Testis (tissue), 5 donors: ENCODE measurements at regions of chr2 and their contacts with region 1.

Region 1: DNA sequence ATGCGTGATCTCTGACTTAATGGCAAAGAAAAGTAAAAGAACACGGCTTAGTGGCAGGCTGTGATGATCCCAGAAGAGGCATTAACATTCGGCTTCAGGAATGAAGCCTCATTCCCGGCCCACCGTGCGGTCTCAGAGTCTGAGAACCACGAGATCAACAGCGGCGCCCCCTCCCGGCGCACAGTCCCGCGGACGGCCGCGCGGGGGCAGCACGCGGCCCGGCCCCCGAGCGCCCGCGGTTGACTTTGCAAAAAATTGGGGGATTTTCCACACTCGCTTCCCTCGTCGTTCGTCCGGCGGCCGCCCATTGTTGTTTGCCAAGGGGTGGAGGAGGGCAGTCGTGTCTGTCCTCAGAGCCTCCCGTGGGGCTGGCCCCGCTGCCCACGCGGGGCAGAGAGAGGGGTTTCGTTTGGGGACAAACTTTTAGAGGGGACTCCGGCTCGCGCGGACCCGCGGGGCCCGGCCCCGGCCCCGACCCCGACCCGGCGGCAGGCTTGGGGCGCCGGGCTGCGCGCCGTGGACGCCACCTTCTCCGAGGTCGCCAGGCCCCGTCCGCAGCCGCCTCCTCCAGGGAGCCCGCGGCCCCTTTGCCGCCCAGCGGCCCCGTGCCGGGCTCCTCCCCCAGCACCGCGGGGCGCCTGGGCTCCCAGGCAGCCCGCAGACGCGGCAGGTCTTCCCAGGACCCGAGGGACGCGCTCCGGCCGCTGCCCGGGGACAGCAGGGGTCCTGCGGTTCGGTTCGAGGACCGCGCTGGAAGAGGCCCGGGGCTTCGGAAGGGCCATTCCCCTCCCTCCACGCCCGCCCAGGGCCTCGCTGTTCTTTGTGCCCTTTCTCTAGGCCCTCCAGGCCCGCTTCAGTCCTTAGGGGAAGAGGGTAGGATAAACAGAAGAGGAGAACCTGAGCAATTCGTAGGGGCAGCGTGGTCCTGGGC is 3.4 kb upstream of the HS6ST1 start:
- DNase-seq: peak; percentile 92
- H3K4me3 ChIP-seq: peak overlapping the region; percentile 55 to 66
- H3K27ac ChIP-seq: peak overlapping the region; percentile 77 to 90
- H3K4me1 ChIP-seq: peaks cover 23% of the 10 kb centered on the region
- H3K27me3 ChIP-seq: no peaks in the 10 kb centered on the region
- CTCF ChIP-seq: peak; percentile 88 to 98 (median 94)
- POLR2A ChIP-seq: no peak

Region 2: DNA sequence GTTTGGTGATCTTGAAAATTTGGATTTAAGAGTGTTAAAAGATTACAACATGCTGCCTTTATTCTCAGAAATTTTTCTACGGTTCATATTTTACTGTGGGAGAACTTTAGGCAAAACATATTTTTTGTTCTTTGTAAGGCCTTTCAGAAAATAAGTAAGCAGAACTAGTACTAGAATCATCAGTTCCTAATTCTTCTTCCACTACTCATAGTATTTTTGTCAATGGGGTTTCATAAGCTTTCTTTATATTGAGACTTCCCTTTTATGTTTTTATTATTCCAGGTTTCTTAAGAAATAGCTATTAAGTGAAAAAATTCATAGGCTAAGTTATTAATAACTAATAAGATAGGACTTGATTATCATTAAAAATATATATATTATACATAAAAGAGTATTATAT is 218.6 kb before region 1 on chr2:
- intact Hi-C with region 1: no loop called
- DNase-seq: no peak
- H3K4me3 ChIP-seq: no peak overlapping the region
- H3K27ac ChIP-seq: no peak overlapping the region
- H3K4me1 ChIP-seq: no peaks in the 10 kb centered on the region
- H3K27me3 ChIP-seq: no peaks in the 10 kb centered on the region
- CTCF ChIP-seq: no peak
- POLR2A ChIP-seq: no peak

Region 3: DNA sequence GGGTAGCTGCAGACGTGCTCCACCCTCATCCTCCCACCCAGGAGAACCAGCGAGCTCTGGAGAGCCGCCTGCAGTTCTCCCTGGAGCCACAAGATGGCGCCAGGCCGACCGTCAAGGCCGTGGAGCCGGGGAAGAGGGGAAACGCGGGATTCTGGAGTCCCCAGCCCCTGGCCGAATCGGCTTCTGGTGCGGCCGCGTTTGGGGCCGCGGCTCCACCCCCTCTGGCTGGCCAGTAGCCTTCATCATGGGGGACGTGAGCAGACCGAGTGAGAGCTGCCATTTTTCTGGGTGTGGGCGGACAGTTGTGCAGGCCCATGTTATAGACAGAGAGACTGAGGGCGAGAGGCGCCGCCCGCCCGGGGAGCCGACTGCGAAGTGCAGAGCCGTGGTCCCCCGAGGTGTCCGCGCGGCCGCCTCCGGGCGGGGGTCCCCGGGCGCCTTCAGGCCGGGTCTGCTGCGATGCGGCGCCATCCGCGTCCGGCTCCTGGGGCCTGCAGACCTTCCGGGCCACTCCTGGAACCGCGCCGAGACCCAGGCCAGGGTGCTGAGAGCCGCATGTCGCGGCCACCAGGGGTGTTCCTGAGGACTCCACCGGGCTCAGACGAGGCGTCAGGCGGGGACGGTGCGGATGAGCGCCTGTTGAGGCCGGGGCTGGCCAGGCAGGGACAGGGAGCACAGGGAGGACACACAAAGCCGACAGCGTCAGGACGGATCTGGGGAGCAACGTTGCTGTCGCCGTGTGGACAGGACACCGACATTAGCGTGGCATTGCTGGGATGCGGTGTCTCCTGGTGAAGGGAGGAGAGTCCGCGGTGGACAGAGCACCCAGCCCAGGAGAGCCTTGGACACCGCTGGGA is 414.9 kb after region 1 on chr2:
- intact Hi-C with region 1: loop called (anchors 10 kb)
- DNase-seq: peak; percentile 90
- H3K4me3 ChIP-seq: peak overlapping the region; percentile 37 to 60
- H3K27ac ChIP-seq: no peak overlapping the region
- H3K4me1 ChIP-seq: peaks cover 9% of the 10 kb centered on the region
- H3K27me3 ChIP-seq: no peaks in the 10 kb centered on the region
- CTCF ChIP-seq: peak; percentile 88 to 99 (median 94)
- POLR2A ChIP-seq: no peak